ENCODE measurements at regions of chr2 and their contacts with region 1.

Region 1: GRCh38 chr2:174778085-174778981 is 14.1 kb upstream of the CHRNA1 start:
- DNase-seq: peak; percentile 86
- ATAC-seq: peak; percentile 94
- H3K4me3 Mint-ChIP-seq: peak overlapping the region; percentile 13
- H3K27ac Mint-ChIP-seq: peak overlapping the region; percentile 73
- H3K4me1 Mint-ChIP-seq: peaks cover 48% of the 10 kb centered on the region
- H3K27me3 Mint-ChIP-seq: no peaks in the 10 kb centered on the region

Region 2: DNA sequence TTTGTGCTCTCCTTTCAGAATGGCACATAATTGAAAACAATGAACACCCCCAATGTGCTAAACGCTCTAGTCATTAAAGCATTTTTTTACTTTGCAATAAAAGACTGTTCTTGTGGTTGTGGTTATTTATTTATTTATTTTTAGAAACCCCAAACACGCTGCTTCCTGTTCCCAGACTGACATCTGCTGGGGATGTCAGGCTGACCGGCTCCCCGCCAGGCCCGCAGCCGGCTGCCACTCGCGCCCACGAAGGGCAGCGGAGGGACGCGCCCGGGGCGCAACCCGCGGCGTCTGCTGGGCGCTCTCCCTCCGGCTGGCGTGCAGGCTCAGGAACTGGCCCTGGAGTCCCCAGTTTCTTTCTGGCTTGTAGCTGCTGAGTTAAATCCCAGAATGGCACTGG is 730.1 kb before region 1 on chr2:
- CTCF ChIA-PET with region 1: no interaction called
- POLR2A ChIA-PET with region 1: no interaction called
- intact Hi-C with region 1: no loop called
- DNase-seq: no peak
- ATAC-seq: no peak
- H3K4me3 Mint-ChIP-seq: no peak overlapping the region
- H3K27ac Mint-ChIP-seq: no peak overlapping the region
- H3K4me1 Mint-ChIP-seq: no peaks in the 10 kb centered on the region
- H3K27me3 Mint-ChIP-seq: peaks cover 2% of the 10 kb centered on the region

Region 3: DNA sequence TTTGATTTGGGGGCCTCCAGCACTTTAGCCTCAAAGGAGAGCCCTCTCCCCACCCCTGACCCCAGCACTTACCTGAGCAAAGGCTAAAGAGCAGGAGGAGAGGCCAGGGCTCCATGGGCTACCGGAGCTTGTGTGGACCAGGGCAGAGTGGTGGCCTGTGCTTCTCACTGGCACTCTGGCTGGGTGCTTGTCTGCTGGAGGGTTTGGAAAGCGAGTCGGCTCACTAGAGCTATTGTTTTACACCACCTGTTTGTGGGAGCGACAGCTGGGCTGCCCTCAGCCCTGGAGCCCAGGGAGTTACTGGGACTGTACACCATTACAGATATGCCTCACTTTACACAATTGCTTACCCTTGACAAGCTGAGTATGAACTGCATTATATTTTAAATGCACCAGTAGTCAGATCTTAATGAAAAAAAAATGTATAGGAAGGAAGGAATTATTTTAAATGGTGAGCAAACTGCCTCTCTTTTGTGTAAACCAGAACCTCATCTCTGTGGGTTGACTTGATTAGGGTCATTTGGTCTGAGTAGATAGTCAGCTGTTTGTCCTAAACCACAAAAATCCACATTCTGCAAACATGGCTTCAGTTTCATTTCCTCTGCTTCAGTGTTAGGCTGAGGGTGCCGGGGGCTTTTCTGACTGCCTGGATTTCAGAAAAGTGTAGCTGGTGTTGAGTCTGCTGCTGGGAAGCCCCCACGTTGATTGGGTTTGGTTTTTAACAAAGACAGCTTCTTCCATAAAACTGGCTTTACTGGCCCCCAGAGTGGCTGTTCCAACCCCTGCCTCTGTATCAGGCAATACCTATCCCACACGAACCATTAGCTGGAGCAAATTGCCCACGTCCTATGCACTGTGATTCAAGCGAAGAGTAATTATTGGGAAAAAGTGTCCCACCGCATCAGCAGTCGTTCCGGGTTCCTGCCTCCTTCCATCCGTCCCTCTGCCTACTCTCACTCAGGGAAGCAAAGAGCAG is 13.8 kb before region 1 on chr2 and contains the start of gene CHRNA1:
- CTCF ChIA-PET with region 1: interaction called, 38 read pairs
- POLR2A ChIA-PET with region 1: no interaction called
- intact Hi-C with region 1: no loop called
- DNase-seq: no peak
- ATAC-seq: no peak
- H3K4me3 Mint-ChIP-seq: no peak within 1 kb of the TSS
- H3K27ac Mint-ChIP-seq: no peak within 1 kb of the TSS
- H3K4me1 Mint-ChIP-seq: peaks cover 5% of the 10 kb centered on the region
- H3K27me3 Mint-ChIP-seq: no peaks in the 10 kb centered on the region
- total RNA-seq, gene CHRNA1: not detected

Region 4: DNA sequence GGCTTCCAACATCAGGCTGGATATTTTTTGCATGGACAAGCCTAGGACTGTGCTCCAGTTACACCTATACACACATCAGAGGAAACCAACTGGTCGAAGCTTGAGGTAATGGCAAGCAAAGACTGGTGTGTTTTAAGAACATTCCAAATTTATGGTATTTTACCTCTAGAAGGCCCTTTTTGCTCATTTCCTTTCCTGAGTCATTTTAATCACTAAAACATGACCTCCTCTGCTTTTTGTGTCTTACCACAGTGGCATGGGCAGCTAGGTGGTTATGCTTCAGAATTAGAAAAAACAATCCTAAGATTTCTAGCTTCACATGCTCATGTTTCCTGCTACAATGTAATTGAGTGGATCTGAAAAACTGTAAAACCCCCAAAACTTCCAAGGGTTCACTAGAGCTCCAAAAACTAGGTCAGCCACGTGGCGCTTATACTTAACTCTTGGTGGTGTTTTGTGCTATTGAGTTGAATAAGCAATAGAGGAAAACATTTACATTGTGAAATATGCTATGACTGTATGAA is 16.6 kb after region 1 on chr2:
- CTCF ChIA-PET with region 1: interaction called, 5 read pairs
- POLR2A ChIA-PET with region 1: no interaction called
- intact Hi-C with region 1: loop called (anchors 1 to 2 kb)
- DNase-seq: peak; percentile 46
- ATAC-seq: peak; percentile 73
- H3K4me3 Mint-ChIP-seq: no peak overlapping the region
- H3K27ac Mint-ChIP-seq: peak overlapping the region; percentile 48
- H3K4me1 Mint-ChIP-seq: peaks cover 26% of the 10 kb centered on the region
- H3K27me3 Mint-ChIP-seq: no peaks in the 10 kb centered on the region

Measured in activated CD4-positive, alpha-beta T cell treated with anti-CD3 and anti-CD28 coated beads for 36 hours (primary cell).